AG04450 (cell line): ENCODE measurements at regions of chr9 and their contacts with region 1.

Region 1: GRCh38 chr9:17476401-17476800 is 102.5 kb upstream of the SH3GL2 start:
- DNase-seq: no peak
- H3K4me3 ChIP-seq: no peak overlapping the region
- H3K27ac ChIP-seq: no peak overlapping the region
- H3K27me3 ChIP-seq: no peaks in the 10 kb centered on the region
- CTCF ChIP-seq: no peak

Region 2: DNA sequence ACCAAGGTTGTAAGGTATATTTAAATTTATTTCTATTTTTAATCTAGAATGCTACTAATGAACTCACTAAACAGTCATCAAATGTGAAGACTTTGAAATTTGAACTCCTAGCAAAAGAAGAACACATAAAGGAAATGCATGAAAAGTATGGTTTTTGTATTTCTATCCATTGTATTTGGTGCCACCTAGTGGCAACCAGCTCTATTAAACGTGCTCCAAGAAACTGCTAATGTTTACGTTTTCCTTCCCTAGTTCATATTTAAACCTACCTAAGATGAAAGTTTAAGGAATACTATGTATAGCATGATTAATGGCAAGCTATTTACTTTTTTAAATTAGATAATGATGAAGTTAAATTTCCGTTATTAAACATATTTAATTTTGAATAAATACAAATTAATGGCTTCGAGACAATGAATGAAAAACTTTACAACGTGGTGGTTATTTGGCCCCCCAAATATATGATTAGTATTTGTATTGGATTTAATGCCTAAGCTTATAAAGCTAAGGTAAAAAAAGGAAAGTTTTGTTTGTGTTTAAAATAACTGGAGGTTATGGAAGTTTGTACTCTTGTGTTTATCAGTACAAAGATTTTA is 13.4 kb before region 1 on chr9:
- CTCF ChIA-PET with region 1: interaction called, 12 read pairs
- POLR2A ChIA-PET with region 1: no interaction called
- DNase-seq: peak; percentile 45
- H3K4me3 ChIP-seq: no peak overlapping the region
- H3K27ac ChIP-seq: no peak overlapping the region
- H3K27me3 ChIP-seq: no peaks in the 10 kb centered on the region
- CTCF ChIP-seq: peak; percentile 73